K562 (cell line): ENCODE measurements at regions of chr19 and their contacts with region 1.

Region 1: GRCh38 chr19:52722062-52723003 is 12.5 kb downstream of the ZNF611 start:
- DNase-seq: no peak
- ATAC-seq: no peak
- H3K4me3 ChIP-seq: no peak overlapping the region
- H3K27ac ChIP-seq: no peak overlapping the region
- H3K4me1 ChIP-seq: peaks cover 30 to 35% of the 10 kb centered on the region in 2 experiments
- H3K27me3 ChIP-seq: no peaks in the 10 kb centered on the region
- CTCF ChIP-seq: no peak
- EP300 ChIP-seq: no peak
- POLR2A ChIP-seq: no peak
- RAD21 ChIP-seq: no peak

Region 2: GRCh38 chr19:52601025-52601973 is 121.0 kb before region 1 on chr19:
- CTCF ChIA-PET with region 1: no interaction called
- POLR2A ChIA-PET with region 1: no interaction called
- in situ Hi-C with region 1: no loop called
- intact Hi-C with region 1: loop called (anchors 10 kb)
- DNase-seq: peak; percentile 93 to 96 (median 94)
- ATAC-seq: peak; percentile 99
- H3K4me3 ChIP-seq: peak overlapping the region; percentile 47
- H3K27ac ChIP-seq: peak overlapping the region; percentile 73
- H3K4me1 ChIP-seq: peaks cover 5 to 14% of the 10 kb centered on the region in 2 experiments; a peak in 3 of 5 replicates
- H3K27me3 ChIP-seq: no peaks in the 10 kb centered on the region
- CTCF ChIP-seq: peak in 2 of 3 experiments; percentile 46 to 59; a peak in 4 of 6 replicates
- EP300 ChIP-seq: no peak
- POLR2A ChIP-seq: peak; percentile 85
- RAD21 ChIP-seq: peak in 1 of 2 experiments; percentile 35; a peak in 2 of 4 replicates

Region 3: GRCh38 chr19:52626915-52627314 is 95.4 kb before region 1 on chr19:
- CTCF ChIA-PET with region 1: no interaction called
- POLR2A ChIA-PET with region 1: no interaction called
- in situ Hi-C with region 1: no loop called
- intact Hi-C with region 1: no loop called
- DNase-seq: peak; percentile 30 to 62 (median 41)
- ATAC-seq: peak; percentile 59
- H3K4me3 ChIP-seq: no peak overlapping the region
- H3K27ac ChIP-seq: peak overlapping the region; percentile 44; the same call in 1 of the 3 replicates
- H3K4me1 ChIP-seq: no peaks in the 10 kb centered on the region; a peak in 2 of 5 replicates
- H3K27me3 ChIP-seq: no peaks in the 10 kb centered on the region
- CTCF ChIP-seq: no peak
- EP300 ChIP-seq: no peak
- POLR2A ChIP-seq: no peak; the same call in 1 of the 2 replicates
- RAD21 ChIP-seq: no peak